MCF 10A (cell line): ENCODE measurements at regions of chrX and their contacts with region 1.

Region 1: DNA sequence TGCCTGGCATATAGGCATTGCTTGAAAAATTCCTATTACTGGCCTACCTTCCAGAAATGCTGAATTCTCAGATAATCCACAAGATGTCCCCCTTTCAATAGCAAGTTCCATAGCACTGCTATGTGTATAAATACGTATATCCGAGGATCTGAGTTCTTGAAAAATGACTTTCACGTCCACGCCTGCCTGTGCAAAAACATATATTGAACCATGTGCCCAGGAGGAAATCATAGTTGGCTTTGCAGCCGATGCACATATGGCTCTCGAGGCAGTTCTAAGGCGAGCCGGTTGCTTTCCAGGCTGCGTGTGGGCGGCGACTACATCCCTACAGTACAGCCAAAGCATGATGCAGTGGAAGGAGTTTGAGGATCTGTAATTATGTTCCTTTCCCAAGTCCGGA is 55.4 kb upstream of the ESX1 start:
- DNase-seq: peak; percentile 48
- H3K4me3 Mint-ChIP-seq: peak overlapping the region; percentile 41
- H3K27ac Mint-ChIP-seq: no peak overlapping the region
- H3K4me1 Mint-ChIP-seq: no peaks in the 10 kb centered on the region
- H3K27me3 Mint-ChIP-seq: peaks cover 31% of the 10 kb centered on the region
- CTCF ChIP-seq: peak; percentile 38

Region 2: GRCh38 chrX:104295636-104296035 is 14.5 kb before region 1 on chrX:
- CTCF ChIA-PET with region 1: interaction called, 13 read pairs
- POLR2A ChIA-PET with region 1: no interaction called
- intact Hi-C with region 1: no loop called
- DNase-seq: no peak
- H3K4me3 Mint-ChIP-seq: no peak overlapping the region
- H3K27ac Mint-ChIP-seq: no peak overlapping the region
- H3K4me1 Mint-ChIP-seq: no peaks in the 10 kb centered on the region
- H3K27me3 Mint-ChIP-seq: peaks cover 68% of the 10 kb centered on the region
- CTCF ChIP-seq: no peak

Region 3: GRCh38 chrX:104335758-104336157 is 25.7 kb after region 1 on chrX:
- CTCF ChIA-PET with region 1: interaction called, 17 read pairs
- POLR2A ChIA-PET with region 1: no interaction called
- intact Hi-C with region 1: no loop called
- DNase-seq: peak; percentile 52
- H3K4me3 Mint-ChIP-seq: no peak overlapping the region
- H3K27ac Mint-ChIP-seq: no peak overlapping the region
- H3K4me1 Mint-ChIP-seq: no peaks in the 10 kb centered on the region
- H3K27me3 Mint-ChIP-seq: peaks cover 25% of the 10 kb centered on the region
- CTCF ChIP-seq: no peak

Region 4: GRCh38 chrX:104343428-104344129 is 33.5 kb after region 1 on chrX:
- CTCF ChIA-PET with region 1: interaction called, 17 read pairs
- POLR2A ChIA-PET with region 1: no interaction called
- intact Hi-C with region 1: loop called (anchors 1 kb)
- DNase-seq: peak; percentile 81
- H3K4me3 Mint-ChIP-seq: no peak overlapping the region
- H3K27ac Mint-ChIP-seq: peak overlapping the region; percentile 63
- H3K4me1 Mint-ChIP-seq: peaks cover 6% of the 10 kb centered on the region
- H3K27me3 Mint-ChIP-seq: peaks cover 77% of the 10 kb centered on the region
- CTCF ChIP-seq: peak; percentile 47

Region 5: DNA sequence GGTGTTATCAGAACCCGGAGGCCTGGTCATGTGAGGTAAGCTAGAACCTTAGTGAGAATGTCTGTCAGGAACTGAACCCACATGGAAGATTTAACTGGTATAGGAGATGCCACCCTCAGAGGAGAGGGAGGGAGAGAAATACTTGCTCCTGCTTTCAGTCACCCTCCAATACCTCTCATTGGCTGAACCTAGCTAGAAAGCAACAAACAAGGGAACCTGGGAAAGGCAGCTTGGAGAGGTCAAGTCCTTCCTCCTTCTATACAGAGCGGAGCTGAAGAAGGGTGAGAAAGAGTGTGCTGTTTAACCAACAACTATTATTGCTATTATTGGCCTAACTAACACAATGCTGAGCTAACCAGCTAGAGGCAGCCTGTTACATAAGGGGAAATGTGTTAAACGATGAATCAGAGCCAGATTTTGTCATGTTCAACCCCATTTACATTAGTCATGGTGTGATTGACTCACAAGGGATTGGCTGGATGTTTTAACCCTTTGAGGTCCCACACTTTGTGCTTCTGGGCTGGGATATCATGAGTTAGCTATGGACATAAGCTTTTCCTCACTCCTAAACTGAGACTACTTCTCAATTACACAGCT is 41.2 kb after region 1 on chrX:
- CTCF ChIA-PET with region 1: interaction called, 11 read pairs
- POLR2A ChIA-PET with region 1: no interaction called
- intact Hi-C with region 1: no loop called
- DNase-seq: peak; percentile 89
- H3K4me3 Mint-ChIP-seq: no peak overlapping the region
- H3K27ac Mint-ChIP-seq: no peak overlapping the region
- H3K4me1 Mint-ChIP-seq: peaks cover 20% of the 10 kb centered on the region
- H3K27me3 Mint-ChIP-seq: peaks cover 46% of the 10 kb centered on the region
- CTCF ChIP-seq: no peak

Region 6: DNA sequence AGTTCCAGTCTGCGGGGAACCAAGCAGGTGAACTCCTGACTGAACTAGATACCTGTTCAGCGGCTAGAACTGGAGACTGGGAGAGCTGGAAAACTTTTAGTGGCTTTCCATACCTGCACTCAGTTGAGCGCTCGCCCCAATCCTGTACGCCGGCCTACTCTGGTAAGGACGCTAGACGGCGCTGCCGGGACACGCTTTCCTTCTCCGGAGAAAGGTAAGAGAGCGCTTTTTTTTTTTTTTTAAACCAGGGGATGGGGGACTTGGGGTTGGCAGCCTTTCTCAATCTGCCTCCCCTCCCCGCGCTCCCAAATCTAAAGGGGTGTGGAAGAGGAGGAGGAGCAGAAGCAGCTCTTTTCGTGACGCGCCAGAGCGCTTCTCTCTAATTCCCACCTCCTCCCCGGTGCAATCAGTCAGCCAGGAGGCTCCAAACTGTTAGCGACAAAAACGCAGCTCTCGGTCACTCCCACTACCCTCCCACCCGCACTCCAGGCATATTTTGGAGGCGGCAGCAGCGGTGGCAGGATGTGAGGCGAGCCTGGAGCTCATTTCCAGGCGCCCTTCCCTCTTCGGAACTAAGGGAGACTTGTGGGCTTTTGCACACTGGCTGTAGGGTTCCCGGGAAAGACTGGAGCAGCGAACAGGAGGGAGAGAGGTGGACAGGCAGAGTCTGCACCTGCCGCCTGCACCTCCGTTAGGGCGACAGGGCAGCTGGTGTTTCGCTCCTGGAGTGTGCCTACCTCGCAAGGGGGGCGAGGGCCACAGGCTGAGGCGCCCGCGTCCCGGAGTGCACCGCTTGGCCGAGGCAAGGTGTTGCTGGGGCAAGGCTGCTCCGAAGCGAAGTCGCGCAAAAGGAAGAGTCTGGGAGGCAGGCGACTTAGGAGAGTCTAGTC is 255.9 kb after region 1 on chrX and contains the start of gene IL1RAPL2:
- CTCF ChIA-PET with region 1: interaction called, 4 read pairs
- POLR2A ChIA-PET with region 1: no interaction called
- intact Hi-C with region 1: loop called (anchors 10 kb)
- DNase-seq: peak; percentile 57
- H3K4me3 Mint-ChIP-seq: peak within 1 kb of the TSS; percentile 74
- H3K27ac Mint-ChIP-seq: no peak within 1 kb of the TSS
- H3K4me1 Mint-ChIP-seq: no peaks in the 10 kb centered on the region
- H3K27me3 Mint-ChIP-seq: peaks cover 36% of the 10 kb centered on the region
- CTCF ChIP-seq: peak; percentile 57
- total RNA-seq, gene IL1RAPL2: 3.2 and 4.4 TPM in 2 replicates